Mammary epithelial cell (primary cell): ENCODE measurements at regions of chr10 and their contacts with region 1.

Region 1: GRCh38 chr10:25875556-25876165 is 58.4 kb upstream of the MYO3A start:
- DNase-seq: peak; percentile 40
- H3K4me3 ChIP-seq: no peak overlapping the region
- H3K27ac ChIP-seq: no peak overlapping the region
- H3K4me1 ChIP-seq: no peaks in the 10 kb centered on the region
- H3K27me3 ChIP-seq: no peaks in the 10 kb centered on the region
- CTCF ChIP-seq: peak; percentile 72 to 87

Region 2: GRCh38 chr10:25257651-25258050 is 618.0 kb before region 1 on chr10:
- CTCF ChIA-PET with region 1: no interaction called
- dilution Hi-C with region 1: no loop called
- in situ Hi-C with region 1: no loop called
- intact Hi-C with region 1: no loop called
- DNase-seq: no peak
- H3K4me3 ChIP-seq: no peak overlapping the region
- H3K27ac ChIP-seq: no peak overlapping the region
- H3K4me1 ChIP-seq: no peaks in the 10 kb centered on the region
- H3K27me3 ChIP-seq: no peaks in the 10 kb centered on the region
- CTCF ChIP-seq: no peak

Region 3: DNA sequence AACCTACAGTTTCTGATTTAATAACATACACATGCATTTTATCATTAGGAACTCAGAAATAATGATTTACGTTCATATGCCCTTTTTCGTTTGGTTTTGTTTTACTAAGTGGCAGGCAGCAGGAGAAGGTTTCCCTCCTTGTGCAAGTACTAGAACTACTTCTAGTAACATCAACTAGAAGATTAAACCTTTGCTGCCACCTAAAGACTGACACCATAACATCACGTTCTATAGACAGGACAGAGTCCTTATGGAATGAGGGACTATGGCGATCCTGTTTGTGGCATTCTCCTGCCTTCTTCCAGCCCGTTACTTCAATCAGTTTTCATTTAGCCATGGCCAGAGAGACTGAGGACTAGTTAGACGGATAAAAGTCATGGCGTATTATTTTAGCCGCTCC is 394.1 kb after region 1 on chr10:
- CTCF ChIA-PET with region 1: no interaction called
- dilution Hi-C with region 1: no loop called
- in situ Hi-C with region 1: no loop called
- intact Hi-C with region 1: loop called (anchors 5 kb)
- DNase-seq: no peak
- H3K4me3 ChIP-seq: no peak overlapping the region
- H3K27ac ChIP-seq: no peak overlapping the region
- H3K4me1 ChIP-seq: no peaks in the 10 kb centered on the region
- H3K27me3 ChIP-seq: no peaks in the 10 kb centered on the region
- CTCF ChIP-seq: no peak

Region 4: DNA sequence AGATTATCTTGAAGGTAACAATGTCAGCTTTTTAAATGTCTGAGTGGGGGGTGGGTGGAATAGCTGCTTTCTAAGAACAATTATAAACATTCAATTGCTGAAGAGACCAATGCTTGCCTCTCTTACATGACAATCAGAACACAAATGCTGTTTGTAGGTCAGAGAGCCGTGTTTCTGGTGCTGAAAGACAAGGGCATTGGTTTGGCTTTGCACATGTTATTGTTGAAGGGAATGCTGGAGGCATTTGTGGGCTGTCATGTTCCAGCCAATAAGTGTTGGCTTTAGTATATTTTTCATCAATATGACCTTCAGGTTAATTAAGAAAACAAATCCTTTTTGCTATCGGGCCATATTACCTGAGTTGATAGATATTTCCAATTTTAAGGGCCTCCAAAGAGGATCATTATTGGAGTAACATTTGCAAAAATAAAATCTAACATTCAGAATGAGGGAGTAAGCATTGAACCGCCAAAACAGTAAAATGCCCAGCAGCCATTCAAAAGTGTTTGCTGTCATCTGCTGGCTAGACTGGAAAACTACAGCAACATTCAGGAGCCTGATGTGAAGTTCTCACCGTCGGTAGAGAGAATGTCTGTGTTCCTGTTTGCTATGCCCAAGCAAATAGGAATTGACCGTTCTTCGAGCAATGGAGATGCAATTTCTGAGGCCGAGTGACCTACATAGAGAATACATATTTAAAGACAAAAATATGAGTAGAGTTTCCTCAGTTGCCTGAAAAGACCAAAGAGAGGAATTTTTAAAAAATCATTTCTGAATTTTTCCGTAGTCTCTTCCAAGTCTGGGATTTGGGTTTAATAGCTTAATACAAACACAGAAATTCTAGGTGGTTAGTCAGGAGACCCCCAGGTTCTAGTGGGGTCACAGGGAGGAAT is 681.3 kb after region 1 on chr10:
- CTCF ChIA-PET with region 1: interaction called, 3 read pairs
- dilution Hi-C with region 1: no loop called
- in situ Hi-C with region 1: no loop called
- intact Hi-C with region 1: loop called (anchors 2 kb)
- DNase-seq: peak; percentile 26
- H3K4me3 ChIP-seq: no peak overlapping the region
- H3K27ac ChIP-seq: no peak overlapping the region
- H3K4me1 ChIP-seq: no peaks in the 10 kb centered on the region
- H3K27me3 ChIP-seq: no peaks in the 10 kb centered on the region
- CTCF ChIP-seq: peak; percentile 81 to 94